ENCODE measurements at regions of chr4 and their contacts with region 1.

Region 1: DNA sequence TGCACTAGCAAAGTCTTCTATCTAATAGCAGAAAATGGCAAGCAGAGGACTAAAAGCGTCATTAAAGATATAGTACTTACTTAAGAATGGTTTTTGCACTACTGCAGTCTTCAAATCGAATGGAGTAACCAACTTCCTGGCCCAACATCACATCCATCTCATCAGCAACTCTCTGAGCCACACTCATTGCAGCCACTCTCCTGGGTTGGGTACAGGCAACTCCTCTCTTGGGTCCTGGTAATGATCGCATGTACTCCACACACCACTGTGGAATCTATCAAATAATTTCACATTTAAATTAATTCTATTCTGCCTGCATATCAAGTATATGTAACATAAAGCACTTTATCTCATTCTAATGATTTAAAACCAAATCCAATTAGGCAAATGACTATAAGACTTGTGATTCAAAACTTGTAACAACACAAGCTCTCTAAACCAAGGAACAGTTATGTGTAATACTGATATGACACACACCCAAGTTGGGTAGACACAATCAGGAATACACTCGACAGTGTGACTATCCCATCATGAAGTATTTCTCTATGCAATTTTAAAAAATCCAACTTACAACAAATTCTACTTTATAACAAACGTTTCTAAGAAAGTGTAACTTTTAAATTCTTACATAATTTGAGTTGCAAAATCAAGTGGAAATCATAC is 13.6 kb downstream of the DHX15 start:
- DNase-seq: no peak
- ATAC-seq: no peak
- H3K4me3 Mint-ChIP-seq: no peak overlapping the region
- H3K27ac Mint-ChIP-seq: no peak overlapping the region
- H3K4me1 Mint-ChIP-seq: peaks cover 71% of the 10 kb centered on the region
- H3K27me3 Mint-ChIP-seq: no peaks in the 10 kb centered on the region
- CTCF ChIP-seq: no peak

Region 2: DNA sequence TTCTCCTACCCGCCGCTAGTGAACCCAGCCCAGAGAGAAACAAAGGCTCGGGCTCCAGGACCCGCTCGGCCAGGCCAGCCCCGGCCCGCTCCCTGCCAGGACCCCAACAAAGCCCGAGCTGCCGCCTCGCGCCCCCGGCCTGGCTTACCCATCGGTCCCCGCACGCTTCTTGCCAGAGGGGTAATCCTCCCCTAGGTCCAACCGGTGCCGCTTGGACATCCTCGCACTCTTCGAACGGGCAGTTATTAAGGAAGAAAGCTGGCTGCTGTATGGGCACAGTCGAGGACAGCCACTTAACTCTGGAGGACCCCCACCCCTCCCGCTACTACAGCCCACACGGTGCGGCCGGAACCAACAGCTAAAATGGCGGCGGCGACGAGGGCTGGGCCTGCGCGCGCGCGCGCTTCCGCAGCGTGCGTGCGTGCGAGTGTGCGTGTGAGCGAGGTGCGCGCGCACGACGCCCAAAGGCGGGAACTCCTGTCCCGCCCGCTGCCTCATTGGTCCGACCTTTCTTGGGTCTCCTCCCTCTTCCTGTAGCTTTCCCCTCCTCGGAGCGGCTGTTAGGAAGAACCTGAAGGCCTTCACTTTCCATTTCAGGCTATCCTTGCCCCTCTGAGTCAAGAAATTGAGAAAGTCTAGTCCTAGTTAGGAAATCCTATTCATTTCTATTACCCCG is 13.6 kb after region 1 on chr4 and contains the start of gene DHX15:
- CTCF ChIA-PET with region 1: interaction called, 4 read pairs
- POLR2A ChIA-PET with region 1: interaction called, 73 read pairs
- intact Hi-C with region 1: no loop called
- DNase-seq: peak; percentile 95
- ATAC-seq: peak; percentile 94
- H3K4me3 Mint-ChIP-seq: peak within 1 kb of the TSS; percentile 92
- H3K27ac Mint-ChIP-seq: peak within 1 kb of the TSS; percentile 99
- H3K4me1 Mint-ChIP-seq: peaks cover 32% of the 10 kb centered on the region
- H3K27me3 Mint-ChIP-seq: no peaks in the 10 kb centered on the region
- CTCF ChIP-seq: no peak
- total RNA-seq, gene DHX15: 216 to 222 TPM